HEK293 (cell line): ENCODE measurements at regions of chr1 and their contacts with region 1.

Region 1: GRCh38 chr1:151993654-151994496 is at the start of gene S100A10:
- H3K4me3 ChIP-seq: peak within 1 kb of the TSS; percentile 79
- H3K27ac ChIP-seq: peak within 1 kb of the TSS; percentile 90
- H3K4me1 ChIP-seq: peaks cover 35% of the 10 kb centered on the region
- CTCF ChIP-seq: peak; percentile 27; the same call in 1 of the 2 replicates

Region 2: GRCh38 chr1:151968058-151968457 is 25.8 kb before region 1 on chr1:
- CTCF ChIA-PET with region 1: interaction called, 409 read pairs
- POLR2A ChIA-PET with region 1: interaction called, 24 read pairs
- H3K4me3 ChIP-seq: no peak overlapping the region
- H3K27ac ChIP-seq: no peak overlapping the region; the same call in 1 of the 2 replicates
- H3K4me1 ChIP-seq: peaks cover 8% of the 10 kb centered on the region; the same call in 1 of the 2 replicates
- CTCF ChIP-seq: peak; percentile 91

Region 3: DNA sequence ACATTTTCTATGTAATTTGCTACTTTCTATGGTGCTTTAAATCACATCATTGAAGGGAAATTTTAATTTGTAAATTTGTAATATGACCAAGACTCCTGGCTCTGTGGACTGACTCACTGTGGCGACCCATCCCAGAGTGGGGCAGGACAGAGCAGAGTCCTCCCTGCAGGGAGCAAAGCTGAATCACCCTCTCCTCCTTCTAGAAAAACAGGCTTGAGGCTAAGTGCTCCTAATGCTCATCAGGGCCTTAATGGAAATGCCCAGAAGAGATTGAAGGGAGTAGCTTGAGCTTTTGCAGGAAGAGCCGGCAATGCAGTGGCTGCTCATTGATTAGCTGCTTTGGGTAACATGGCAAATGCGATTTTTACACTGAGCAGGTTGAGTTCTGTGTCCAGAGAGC is 17.0 kb before region 1 on chr1:
- CTCF ChIA-PET with region 1: interaction called, 409 read pairs
- POLR2A ChIA-PET with region 1: interaction called, 24 read pairs
- H3K4me3 ChIP-seq: no peak overlapping the region
- H3K27ac ChIP-seq: no peak overlapping the region
- H3K4me1 ChIP-seq: peaks cover 25% of the 10 kb centered on the region
- CTCF ChIP-seq: no peak